Posterior vena cava (tissue), 2 donors: ENCODE measurements at regions of chr18 and their contacts with region 1.

Region 1: DNA sequence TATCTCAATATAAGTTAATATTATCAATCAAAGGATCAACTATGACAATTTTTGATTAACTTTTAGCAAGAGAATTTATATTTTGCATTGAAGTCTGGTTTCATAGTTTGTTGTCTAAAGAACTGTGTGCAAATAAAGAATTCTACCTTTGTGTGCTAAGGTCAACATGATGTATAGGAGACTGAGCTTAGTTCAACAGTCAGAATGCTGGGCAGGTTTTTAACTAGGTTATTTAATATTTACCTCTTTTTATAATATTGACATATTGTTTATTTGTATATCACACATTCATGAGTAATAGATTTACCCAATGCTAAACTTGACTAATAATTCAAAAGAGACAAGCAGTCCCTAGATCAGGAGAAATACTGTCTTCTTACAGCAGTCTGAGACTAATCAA is 831.4 kb downstream of the DSC3 start:
- DNase-seq: no peak

Region 2: DNA sequence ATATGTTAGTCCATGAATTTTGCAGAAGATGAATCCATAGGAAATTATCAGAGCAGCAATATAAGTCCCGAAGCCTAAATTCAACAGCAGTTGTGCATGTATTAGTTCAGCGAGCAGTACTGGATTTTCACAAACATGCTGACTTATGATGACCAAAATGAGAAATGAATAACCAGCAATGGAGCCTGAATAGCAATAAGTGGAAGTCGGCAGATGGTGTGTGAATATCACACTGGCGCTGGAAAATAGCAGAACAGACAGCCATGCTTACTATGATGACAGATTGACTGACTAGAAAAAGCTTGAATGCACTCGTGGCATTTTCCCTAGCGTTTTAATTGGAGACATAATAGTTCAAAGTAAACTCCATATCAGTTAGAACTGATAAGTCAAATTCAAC is 283.0 kb before region 1 on chr18:
- intact Hi-C with region 1: loop called in 1 of 2 experiments (anchors 5 kb)
- DNase-seq: no peak

Region 3: DNA sequence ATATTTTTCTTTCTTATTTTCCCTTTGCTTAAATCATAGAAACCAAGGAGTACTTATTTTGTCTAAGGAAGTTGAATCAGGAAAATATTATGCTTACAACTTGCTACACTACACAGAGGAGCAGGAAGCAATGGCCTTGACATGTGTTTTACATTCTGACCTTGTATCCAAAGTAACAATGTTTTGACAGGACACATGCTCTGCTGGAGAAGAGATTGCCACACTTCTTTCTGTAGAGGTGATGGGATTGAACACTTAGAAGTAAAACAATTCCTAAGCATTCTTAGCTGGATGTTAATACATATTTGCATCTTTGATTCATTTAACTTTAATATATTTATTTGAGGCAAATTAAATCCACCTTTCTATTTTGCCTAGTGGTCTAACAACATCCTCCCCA is 97.7 kb before region 1 on chr18:
- intact Hi-C with region 1: no loop called
- DNase-seq: no peak